MCF 10A (cell line): ENCODE measurements at regions of chr11 and their contacts with region 1.

Region 1: GRCh38 chr11:12673924-12674570 is at the start of gene TEAD1:
- DNase-seq: peak; percentile 91
- H3K4me3 Mint-ChIP-seq: peak within 1 kb of the TSS; percentile 90
- H3K27ac Mint-ChIP-seq: peak within 1 kb of the TSS; percentile 92
- H3K4me1 Mint-ChIP-seq: peaks cover 25% of the 10 kb centered on the region
- H3K27me3 Mint-ChIP-seq: no peaks in the 10 kb centered on the region
- CTCF ChIP-seq: no peak
- total RNA-seq, gene TEAD1: 91.0 and 123 TPM in 2 replicates

Region 2: DNA sequence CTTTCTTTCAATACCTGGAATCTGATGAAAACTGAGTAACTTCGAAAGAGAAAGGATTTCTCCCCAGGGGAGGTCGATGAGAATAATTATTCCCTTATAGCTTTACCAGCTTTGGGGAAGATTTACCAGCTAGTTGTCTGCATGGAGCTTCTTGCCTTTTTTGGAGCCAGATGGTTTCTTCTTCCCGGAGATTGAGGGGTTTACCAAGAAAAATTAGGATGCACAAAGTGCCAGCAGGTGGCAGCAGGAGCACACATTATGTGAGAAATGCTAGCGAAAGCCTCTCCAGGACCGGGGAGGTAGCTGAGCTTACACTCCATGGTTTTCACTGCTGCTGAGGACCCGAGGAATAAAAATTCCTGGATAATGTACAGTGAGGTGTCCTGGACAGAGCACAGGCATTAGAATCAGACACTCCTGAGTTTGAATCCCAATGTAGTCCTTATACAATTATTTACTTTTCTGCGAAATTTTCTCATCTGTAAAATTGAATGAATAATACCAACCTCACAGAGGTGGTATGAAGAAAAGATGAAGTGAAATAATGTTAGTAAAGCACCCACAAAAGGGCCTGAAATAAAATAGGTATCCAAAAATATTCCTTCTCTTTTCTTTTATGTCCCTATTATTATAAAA is 342.7 kb before region 1 on chr11:
- CTCF ChIA-PET with region 1: interaction called, 5 read pairs
- POLR2A ChIA-PET with region 1: interaction called, 5 read pairs
- intact Hi-C with region 1: loop called (anchors 2 kb)
- DNase-seq: peak; percentile 90
- H3K4me3 Mint-ChIP-seq: no peak overlapping the region
- H3K27ac Mint-ChIP-seq: no peak overlapping the region
- H3K4me1 Mint-ChIP-seq: peaks cover 4% of the 10 kb centered on the region
- H3K27me3 Mint-ChIP-seq: no peaks in the 10 kb centered on the region
- CTCF ChIP-seq: peak; percentile 89

Region 3: DNA sequence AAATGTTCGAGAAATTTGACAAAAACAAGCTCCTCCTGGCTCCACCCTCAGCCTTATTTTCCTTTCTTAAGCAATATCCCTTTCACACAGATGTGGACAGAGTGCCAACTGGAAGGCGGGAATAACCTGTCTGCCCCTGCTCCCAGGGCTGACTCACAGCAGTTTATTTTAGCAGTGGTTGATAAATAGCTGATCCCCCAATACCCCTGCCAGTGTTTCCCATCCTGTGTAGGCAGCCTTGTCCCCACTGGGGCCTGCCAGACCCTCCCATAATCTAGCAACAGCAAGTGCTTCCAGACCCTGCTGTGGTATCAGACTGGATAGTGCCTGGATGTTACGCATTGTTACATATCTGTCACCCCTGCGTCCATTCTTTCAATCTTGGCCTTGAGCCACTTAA is 243.1 kb before region 1 on chr11:
- CTCF ChIA-PET with region 1: interaction called, 3 read pairs
- POLR2A ChIA-PET with region 1: interaction called, 13 read pairs
- intact Hi-C with region 1: no loop called
- DNase-seq: peak; percentile 97
- H3K4me3 Mint-ChIP-seq: peak overlapping the region; percentile 68
- H3K27ac Mint-ChIP-seq: peak overlapping the region; percentile 95
- H3K4me1 Mint-ChIP-seq: peaks cover 23% of the 10 kb centered on the region
- H3K27me3 Mint-ChIP-seq: no peaks in the 10 kb centered on the region
- CTCF ChIP-seq: no peak

Region 4: GRCh38 chr11:12518606-12519385 is 155.3 kb before region 1 on chr11:
- CTCF ChIA-PET with region 1: no interaction called
- POLR2A ChIA-PET with region 1: no interaction called
- intact Hi-C with region 1: no loop called
- DNase-seq: no peak
- H3K4me3 Mint-ChIP-seq: no peak overlapping the region
- H3K27ac Mint-ChIP-seq: no peak overlapping the region
- H3K4me1 Mint-ChIP-seq: no peaks in the 10 kb centered on the region
- H3K27me3 Mint-ChIP-seq: no peaks in the 10 kb centered on the region
- CTCF ChIP-seq: no peak

Region 5: GRCh38 chr11:12662101-12662689 is 11.9 kb before region 1 on chr11:
- CTCF ChIA-PET with region 1: no interaction called
- POLR2A ChIA-PET with region 1: no interaction called
- intact Hi-C with region 1: no loop called
- DNase-seq: no peak
- H3K4me3 Mint-ChIP-seq: no peak overlapping the region
- H3K27ac Mint-ChIP-seq: no peak overlapping the region
- H3K4me1 Mint-ChIP-seq: no peaks in the 10 kb centered on the region
- H3K27me3 Mint-ChIP-seq: peaks cover 23% of the 10 kb centered on the region
- CTCF ChIP-seq: no peak

Region 6: GRCh38 chr11:12693479-12694181 is 19.6 kb after region 1 on chr11:
- CTCF ChIA-PET with region 1: interaction called, 8 read pairs
- POLR2A ChIA-PET with region 1: interaction called, 248 read pairs
- intact Hi-C with region 1: loop called (anchors 1 kb)
- DNase-seq: peak; percentile 97
- H3K4me3 Mint-ChIP-seq: peak overlapping the region; percentile 62
- H3K27ac Mint-ChIP-seq: peak overlapping the region; percentile 94
- H3K4me1 Mint-ChIP-seq: peaks cover 75% of the 10 kb centered on the region
- H3K27me3 Mint-ChIP-seq: no peaks in the 10 kb centered on the region
- CTCF ChIP-seq: no peak

Region 7: DNA sequence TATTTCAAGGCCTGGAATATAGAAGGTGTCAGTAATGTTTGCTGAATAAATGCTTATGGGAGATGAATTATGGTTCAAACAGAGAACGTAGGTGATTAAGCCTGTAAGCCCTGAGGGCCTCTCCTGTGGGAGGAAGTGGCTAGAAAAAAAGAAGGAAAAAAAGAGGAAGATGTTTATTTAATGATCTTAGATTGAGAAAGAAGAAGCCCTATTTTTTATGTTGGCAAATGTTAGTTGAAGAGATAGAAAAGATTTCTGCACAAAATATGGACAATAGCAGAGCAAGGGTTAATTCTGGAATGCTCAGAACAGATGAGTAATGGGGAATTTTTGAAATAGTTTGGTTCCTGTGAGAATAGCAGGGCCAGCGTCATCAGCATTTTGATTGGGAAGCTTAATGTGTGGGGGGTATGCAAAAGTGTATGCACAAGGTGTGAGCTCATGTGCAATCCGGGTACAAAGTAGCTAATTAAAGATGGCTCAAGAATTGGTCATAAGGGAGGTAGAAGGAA is 95.8 kb after region 1 on chr11:
- CTCF ChIA-PET with region 1: interaction called, 5 read pairs
- POLR2A ChIA-PET with region 1: interaction called, 64 read pairs
- intact Hi-C with region 1: loop called (anchors 5 kb)
- DNase-seq: peak; percentile 86
- H3K4me3 Mint-ChIP-seq: no peak overlapping the region
- H3K27ac Mint-ChIP-seq: no peak overlapping the region
- H3K4me1 Mint-ChIP-seq: peaks cover 22% of the 10 kb centered on the region
- H3K27me3 Mint-ChIP-seq: no peaks in the 10 kb centered on the region
- CTCF ChIP-seq: no peak

Region 8: GRCh38 chr11:12888525-12889158 is 214.6 kb after region 1 on chr11:
- CTCF ChIA-PET with region 1: interaction called, 11 read pairs
- POLR2A ChIA-PET with region 1: interaction called, 18 read pairs
- intact Hi-C with region 1: loop called (anchors 1 kb)
- DNase-seq: peak; percentile 85
- H3K4me3 Mint-ChIP-seq: no peak overlapping the region
- H3K27ac Mint-ChIP-seq: peak overlapping the region; percentile 84
- H3K4me1 Mint-ChIP-seq: peaks cover 17% of the 10 kb centered on the region
- H3K27me3 Mint-ChIP-seq: no peaks in the 10 kb centered on the region
- CTCF ChIP-seq: peak; percentile 55